ENCODE measurements at regions of chr11 and their contacts with region 1.

Region 1: DNA sequence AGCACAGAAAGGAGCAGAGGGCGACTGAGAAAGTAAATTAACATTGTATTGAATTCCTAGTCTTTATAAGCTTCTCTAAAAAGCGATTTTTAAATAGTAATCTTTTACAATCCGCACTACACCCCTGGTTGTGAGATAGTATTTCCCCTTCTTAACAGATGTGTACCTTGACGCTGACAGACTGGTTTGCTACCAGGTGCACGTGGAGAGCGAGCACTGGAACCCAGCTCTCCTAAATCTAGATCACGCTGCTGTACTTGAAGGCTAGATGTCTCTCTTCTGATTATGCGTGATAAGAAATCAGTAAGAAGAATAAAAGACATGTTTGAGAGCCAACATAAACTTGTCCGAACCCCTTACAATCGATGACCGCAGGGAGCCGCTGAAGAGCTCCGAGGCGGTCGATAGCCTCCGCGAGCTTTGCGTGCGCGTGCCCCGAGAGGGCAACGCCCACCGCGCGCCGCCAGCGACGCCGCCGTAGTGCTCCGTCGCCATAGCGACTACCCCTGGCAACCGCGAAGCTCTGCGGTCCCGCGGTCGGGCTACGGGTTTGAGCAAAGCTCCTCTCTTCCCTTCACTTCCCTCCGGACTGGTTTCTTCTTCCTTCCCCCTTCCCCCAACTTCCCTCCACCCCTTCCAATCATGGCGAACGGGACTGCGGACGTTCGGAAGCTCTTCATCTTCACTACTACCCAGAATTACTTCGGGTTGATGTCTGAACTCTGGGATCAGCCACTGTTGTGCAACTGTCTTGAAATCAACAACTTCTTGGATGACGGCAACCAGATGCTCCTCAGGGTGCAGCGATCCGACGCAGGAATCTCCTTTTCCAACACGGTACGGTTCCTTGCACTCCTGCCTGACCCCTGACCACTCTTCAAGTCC is at the start of gene DYNC2H1:
- DNase-seq: peak; percentile 92
- H3K4me3 ChIP-seq: peak within 1 kb of the TSS; percentile 21 to 73 (median 71)
- H3K27ac ChIP-seq: no peak within 1 kb of the TSS
- H3K4me1 ChIP-seq: peaks cover 6% of the 10 kb centered on the region
- H3K27me3 ChIP-seq: peaks cover 7 to 15% of the 10 kb centered on the region in 2 experiments
- CTCF ChIP-seq: peak; percentile 39 to 66
- POLR2A ChIP-seq: peak; percentile 41
- total RNA-seq, gene DYNC2H1: 4.2 and 5.7 TPM in 2 replicates

Region 2: GRCh38 chr11:103091801-103092524 is 17.2 kb before region 1 on chr11 and contains the start of gene DCUN1D5:
- CTCF ChIA-PET with region 1: interaction called, 13 read pairs
- POLR2A ChIA-PET with region 1: interaction called, 9 read pairs
- dilution Hi-C with region 1: no loop called
- intact Hi-C with region 1: loop called (anchors 1 kb)
- DNase-seq: peak; percentile 96
- H3K4me3 ChIP-seq: peak within 1 kb of the TSS; percentile 64 to 94 (median 73)
- H3K27ac ChIP-seq: peak within 1 kb of the TSS; percentile 70
- H3K4me1 ChIP-seq: peaks cover 22% of the 10 kb centered on the region
- H3K27me3 ChIP-seq: peaks cover 0 to 4% of the 10 kb centered on the region in 2 experiments
- CTCF ChIP-seq: no peak
- POLR2A ChIP-seq: peak; percentile 97
- total RNA-seq, gene DCUN1D5: 49.8 and 52.9 TPM in 2 replicates

Region 3: DNA sequence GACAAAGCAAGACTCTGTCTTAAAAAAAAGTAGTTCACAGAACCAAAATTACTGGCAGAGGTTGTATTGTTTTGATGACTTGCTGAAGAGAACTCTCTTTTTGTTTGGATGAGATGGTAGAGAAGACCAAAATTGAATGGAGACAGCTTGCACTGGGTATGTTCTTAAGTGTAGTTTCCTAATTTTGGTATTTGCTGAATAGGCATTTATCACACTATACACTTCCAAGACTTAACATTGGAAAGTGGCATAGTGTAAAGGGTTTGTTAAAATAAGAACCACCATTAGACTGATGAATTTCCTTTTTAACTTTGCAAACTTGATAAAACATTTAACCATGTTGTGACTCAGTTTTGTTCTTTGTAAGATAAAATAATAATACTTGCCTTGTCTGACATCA is 11.9 kb before region 1 on chr11:
- CTCF ChIA-PET with region 1: interaction called, 13 read pairs
- POLR2A ChIA-PET with region 1: interaction called, 9 read pairs
- dilution Hi-C with region 1: no loop called
- intact Hi-C with region 1: loop called (anchors 1 kb)
- DNase-seq: no peak
- H3K4me3 ChIP-seq: no peak overlapping the region
- H3K27ac ChIP-seq: no peak overlapping the region
- H3K4me1 ChIP-seq: peaks cover 3% of the 10 kb centered on the region
- H3K27me3 ChIP-seq: peaks cover 6 to 10% of the 10 kb centered on the region in 2 experiments
- CTCF ChIP-seq: no peak
- POLR2A ChIP-seq: no peak